ENCODE measurements at regions of chrX and their contacts with region 1.

Region 1: DNA sequence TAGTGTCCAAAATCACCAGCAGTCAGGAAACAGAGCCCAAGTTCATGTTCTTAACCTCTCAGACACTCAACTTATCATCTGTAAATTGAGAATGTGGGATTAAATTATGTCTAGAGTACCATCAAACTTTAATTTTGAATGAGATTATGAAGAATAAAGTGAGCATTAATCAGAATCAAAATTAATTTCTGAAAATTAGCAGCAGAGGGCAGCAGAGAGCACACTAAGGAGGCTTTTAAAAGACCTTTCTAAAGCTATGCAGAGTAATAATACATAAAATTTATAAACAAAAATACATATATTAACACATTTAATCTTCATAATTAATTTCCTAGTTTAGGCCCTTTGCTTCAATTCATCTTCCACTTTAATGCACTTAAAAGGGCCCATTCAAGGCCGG is 7.1 kb downstream of the TASL start:
- DNase-seq: no peak
- H3K4me3 ChIP-seq: no peak overlapping the region
- H3K27ac ChIP-seq: no peak overlapping the region
- H3K4me1 ChIP-seq: no peaks in the 10 kb centered on the region
- H3K27me3 ChIP-seq: no peaks in the 10 kb centered on the region
- CTCF ChIP-seq: peak; percentile 71

Region 2: DNA sequence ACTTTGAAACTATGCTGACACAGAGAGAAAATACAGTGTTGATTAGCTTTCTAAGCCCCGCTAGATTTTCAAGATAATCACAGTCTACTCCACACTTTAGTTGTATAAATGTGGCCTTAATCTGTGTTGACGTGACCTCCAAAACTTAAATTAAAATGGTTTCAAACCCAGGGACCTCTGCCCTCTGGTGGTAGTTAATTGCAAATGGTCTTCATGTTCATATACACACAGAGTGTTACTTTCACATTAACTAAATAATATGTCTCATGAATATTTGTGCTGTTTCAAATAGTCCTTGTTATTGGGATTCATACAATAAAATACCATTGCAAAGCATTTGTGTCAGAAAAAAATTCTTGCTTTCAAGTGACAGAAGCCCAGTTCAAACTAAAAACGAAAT is 57.2 kb before region 1 on chrX:
- CTCF ChIA-PET with region 1: no interaction called
- POLR2A ChIA-PET with region 1: no interaction called
- intact Hi-C with region 1: loop called (anchors 2 kb)
- DNase-seq: no peak
- H3K4me3 ChIP-seq: no peak overlapping the region
- H3K27ac ChIP-seq: no peak overlapping the region
- H3K4me1 ChIP-seq: no peaks in the 10 kb centered on the region
- H3K27me3 ChIP-seq: no peaks in the 10 kb centered on the region
- CTCF ChIP-seq: peak; percentile 64

Region 3: GRCh38 chrX:30593435-30594200 is 23.1 kb after region 1 on chrX:
- CTCF ChIA-PET with region 1: interaction called, 9 read pairs
- POLR2A ChIA-PET with region 1: no interaction called
- intact Hi-C with region 1: loop called (anchors 1 kb)
- DNase-seq: peak; percentile 41 to 42
- H3K4me3 ChIP-seq: no peak overlapping the region
- H3K27ac ChIP-seq: peak overlapping the region; percentile 43
- H3K4me1 ChIP-seq: peaks cover 22% of the 10 kb centered on the region; the same call in 1 of the 2 replicates
- H3K27me3 ChIP-seq: no peaks in the 10 kb centered on the region
- CTCF ChIP-seq: peak; percentile 30; the same call in 1 of the 2 replicates

Region 4: GRCh38 chrX:30713061-30713525 is 142.6 kb after region 1 on chrX:
- CTCF ChIA-PET with region 1: no interaction called
- POLR2A ChIA-PET with region 1: no interaction called
- intact Hi-C with region 1: loop called (anchors 1 kb)
- DNase-seq: peak in 1 of 2 experiments; percentile 22
- H3K4me3 ChIP-seq: no peak overlapping the region
- H3K27ac ChIP-seq: no peak overlapping the region
- H3K4me1 ChIP-seq: no peaks in the 10 kb centered on the region
- H3K27me3 ChIP-seq: no peaks in the 10 kb centered on the region
- CTCF ChIP-seq: peak; percentile 70

Measured in PC-9 (cell line).